ENCODE measurements at regions of chr19 and their contacts with region 1.

Region 1: GRCh38 chr19:3479177-3479833 is 1.0 kb downstream of the SMIM24 start:
- DNase-seq: no peak
- H3K4me3 ChIP-seq: no peak overlapping the region
- H3K27ac ChIP-seq: no peak overlapping the region
- H3K4me1 ChIP-seq: peaks cover 5% of the 10 kb centered on the region; the same call in 1 of the 2 replicates
- H3K27me3 ChIP-seq: no peaks in the 10 kb centered on the region
- CTCF ChIP-seq: no peak

Region 2: DNA sequence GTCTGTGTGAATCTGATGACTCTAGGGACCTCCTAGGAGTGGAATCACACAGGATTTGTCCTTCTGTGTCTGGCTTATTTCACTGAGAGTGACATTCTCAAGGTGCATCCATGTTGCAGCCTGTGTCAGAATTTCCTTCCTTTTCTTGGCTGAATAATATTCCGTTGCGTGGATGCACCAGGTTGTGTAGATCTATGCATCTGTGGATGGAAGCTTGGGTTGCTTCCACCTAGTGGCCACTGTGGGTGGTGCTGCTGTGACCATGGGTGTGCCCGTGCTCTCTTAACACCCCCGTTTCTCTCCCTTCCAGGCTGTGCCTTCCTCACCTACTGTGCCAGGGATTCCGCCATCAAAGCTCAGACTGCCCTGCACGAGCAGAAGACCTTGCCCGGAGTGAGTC is 228.6 kb before region 1 on chr19:
- CTCF ChIA-PET with region 1: interaction called, 12 read pairs
- POLR2A ChIA-PET with region 1: no interaction called
- intact Hi-C with region 1: no loop called
- DNase-seq: peak in 1 of 2 experiments; percentile 5
- H3K4me3 ChIP-seq: no peak overlapping the region
- H3K27ac ChIP-seq: no peak overlapping the region
- H3K4me1 ChIP-seq: no peaks in the 10 kb centered on the region
- H3K27me3 ChIP-seq: peaks cover 6% of the 10 kb centered on the region; the same call in 1 of the 2 replicates
- CTCF ChIP-seq: peak; percentile 61

Region 3: GRCh38 chr19:3463714-3464586 is 15.4 kb before region 1 on chr19:
- CTCF ChIA-PET with region 1: interaction called, 20 read pairs
- POLR2A ChIA-PET with region 1: no interaction called
- intact Hi-C with region 1: no loop called
- DNase-seq: no peak
- H3K4me3 ChIP-seq: no peak overlapping the region
- H3K27ac ChIP-seq: no peak overlapping the region
- H3K4me1 ChIP-seq: no peaks in the 10 kb centered on the region
- H3K27me3 ChIP-seq: no peaks in the 10 kb centered on the region
- CTCF ChIP-seq: no peak

Region 4: DNA sequence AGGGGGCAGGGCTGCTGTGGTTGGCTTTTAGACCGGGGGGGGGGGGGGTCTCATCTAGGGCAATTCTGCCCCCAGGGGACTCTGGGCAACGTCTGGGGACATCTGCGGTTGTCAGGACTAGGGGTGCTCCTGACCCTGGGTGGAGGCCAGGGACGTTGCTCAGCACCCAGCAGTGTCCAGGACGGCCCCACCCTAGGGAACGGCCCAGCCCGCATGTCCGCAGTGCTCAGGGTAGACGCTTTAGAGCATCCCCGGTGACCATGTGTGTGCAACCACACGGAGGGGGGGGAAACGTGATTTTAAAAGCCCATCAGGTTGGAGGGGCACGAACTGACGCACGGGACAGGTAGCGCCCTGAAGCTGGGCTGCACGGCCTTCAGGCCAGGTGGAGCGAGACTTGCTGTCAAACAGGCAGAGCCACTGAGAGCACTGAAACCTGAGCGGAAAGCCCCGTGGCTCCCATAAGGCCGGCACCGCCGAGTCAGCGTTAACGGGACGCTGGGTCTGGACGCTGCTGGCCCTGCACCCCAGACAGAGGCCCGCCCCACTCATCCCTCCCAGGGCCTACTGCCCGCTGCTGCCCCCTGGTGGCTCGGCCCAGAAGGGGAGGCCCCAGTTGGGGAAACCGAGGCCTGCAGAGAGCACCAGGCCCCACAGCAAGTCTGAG is 139.0 kb after region 1 on chr19:
- CTCF ChIA-PET with region 1: no interaction called
- POLR2A ChIA-PET with region 1: no interaction called
- intact Hi-C with region 1: no loop called
- DNase-seq: peak in 1 of 2 experiments; percentile 33
- H3K4me3 ChIP-seq: no peak overlapping the region
- H3K27ac ChIP-seq: no peak overlapping the region
- H3K4me1 ChIP-seq: no peaks in the 10 kb centered on the region
- H3K27me3 ChIP-seq: no peaks in the 10 kb centered on the region
- CTCF ChIP-seq: peak; percentile 81

Region 5: DNA sequence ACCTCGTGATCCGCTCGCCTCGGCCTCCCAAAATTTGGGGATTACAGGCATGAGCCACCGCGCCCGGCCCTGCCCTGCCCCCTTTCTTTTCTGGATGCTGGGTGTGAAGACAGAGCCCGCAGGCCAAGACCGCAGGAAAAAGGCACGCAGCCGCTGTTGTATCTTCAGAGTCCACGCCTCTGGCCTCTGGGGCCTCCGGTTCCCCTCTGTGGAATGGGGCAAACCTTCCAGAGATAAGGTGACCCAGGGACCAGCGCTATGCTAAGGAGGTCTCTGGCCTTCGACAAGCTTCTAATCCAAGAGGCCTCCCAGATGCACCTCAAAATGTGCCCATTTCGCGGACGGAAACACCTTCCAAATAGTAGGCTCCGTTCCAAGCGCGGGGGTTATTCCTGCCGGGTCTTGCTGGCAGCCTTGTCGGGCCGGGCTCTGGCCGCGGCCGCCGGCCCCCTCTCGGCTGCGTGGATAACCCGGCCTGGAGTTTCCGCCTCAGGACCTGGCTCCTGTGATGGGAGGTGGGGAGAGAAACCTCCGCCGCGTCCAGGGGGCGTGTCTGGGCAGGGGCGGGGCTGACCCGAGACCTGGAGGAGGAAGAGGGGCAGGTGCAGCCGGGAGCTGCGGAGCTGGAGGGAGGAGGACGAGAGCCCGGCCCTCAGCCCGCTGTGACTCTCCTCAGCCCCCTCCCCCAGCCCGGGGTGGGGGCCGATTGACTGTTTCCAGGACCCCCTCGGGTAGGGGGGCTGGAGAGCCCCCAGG is 242.0 kb after region 1 on chr19:
- CTCF ChIA-PET with region 1: interaction called, 13 read pairs
- POLR2A ChIA-PET with region 1: no interaction called
- intact Hi-C with region 1: no loop called
- DNase-seq: peak; percentile 82 to 96
- H3K4me3 ChIP-seq: peak overlapping the region; percentile 65
- H3K27ac ChIP-seq: no peak overlapping the region
- H3K4me1 ChIP-seq: peaks cover 16% of the 10 kb centered on the region; the same call in 1 of the 2 replicates
- H3K27me3 ChIP-seq: no peaks in the 10 kb centered on the region
- CTCF ChIP-seq: no peak